ENCODE measurements at regions of chr2 and their contacts with region 1.

Region 1: DNA sequence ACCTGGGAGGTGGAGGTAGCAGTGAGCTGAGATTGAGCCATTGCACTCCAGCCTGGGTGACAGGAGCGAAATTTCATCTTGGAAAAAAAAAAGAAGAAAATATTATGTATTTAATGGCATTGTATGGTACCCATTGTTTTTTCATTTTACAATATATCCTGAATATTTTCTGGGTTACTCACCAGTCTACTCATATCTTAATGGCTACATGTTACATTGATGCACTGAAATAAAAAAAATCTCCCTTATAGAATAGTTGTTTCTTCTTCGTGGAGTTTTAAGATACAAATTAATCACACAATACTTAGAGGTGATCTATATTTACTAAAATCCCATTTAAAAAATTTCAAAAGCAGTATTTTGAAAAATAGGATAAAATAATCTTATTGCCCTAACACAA is 66.3 kb upstream of the XPO1 start:
- DNase-seq: no peak
- H3K4me3 ChIP-seq: no peak overlapping the region
- H3K27ac ChIP-seq: no peak overlapping the region
- H3K4me1 ChIP-seq: no peaks in the 10 kb centered on the region
- H3K27me3 ChIP-seq: no peaks in the 10 kb centered on the region
- CTCF ChIP-seq: no peak

Region 2: GRCh38 chr2:61135510-61135909 is 468.9 kb before region 1 on chr2:
- CTCF ChIA-PET with region 1: no interaction called
- POLR2A ChIA-PET with region 1: interaction called, 10 read pairs
- intact Hi-C with region 1: no loop called
- DNase-seq: peak in 1 of 2 experiments; percentile 41
- H3K4me3 ChIP-seq: no peak overlapping the region
- H3K27ac ChIP-seq: no peak overlapping the region
- H3K4me1 ChIP-seq: no peaks in the 10 kb centered on the region
- H3K27me3 ChIP-seq: no peaks in the 10 kb centered on the region
- CTCF ChIP-seq: peak; percentile 47; the same call in 1 of the 2 replicates

Region 3: GRCh38 chr2:61658841-61659780 is 54.7 kb after region 1 on chr2:
- CTCF ChIA-PET with region 1: no interaction called
- POLR2A ChIA-PET with region 1: interaction called, 11 read pairs
- intact Hi-C with region 1: no loop called
- DNase-seq: peak in 1 of 2 experiments; percentile 74
- H3K4me3 ChIP-seq: no peak overlapping the region
- H3K27ac ChIP-seq: peak overlapping the region; percentile 18; the same call in 1 of the 2 replicates
- H3K4me1 ChIP-seq: peaks cover 10% of the 10 kb centered on the region; the same call in 1 of the 2 replicates
- H3K27me3 ChIP-seq: no peaks in the 10 kb centered on the region
- CTCF ChIP-seq: peak; percentile 72